CD8-positive, alpha-beta memory T cell (primary cell): ENCODE measurements at regions of chr22 and their contacts with region 1.

Region 1: DNA sequence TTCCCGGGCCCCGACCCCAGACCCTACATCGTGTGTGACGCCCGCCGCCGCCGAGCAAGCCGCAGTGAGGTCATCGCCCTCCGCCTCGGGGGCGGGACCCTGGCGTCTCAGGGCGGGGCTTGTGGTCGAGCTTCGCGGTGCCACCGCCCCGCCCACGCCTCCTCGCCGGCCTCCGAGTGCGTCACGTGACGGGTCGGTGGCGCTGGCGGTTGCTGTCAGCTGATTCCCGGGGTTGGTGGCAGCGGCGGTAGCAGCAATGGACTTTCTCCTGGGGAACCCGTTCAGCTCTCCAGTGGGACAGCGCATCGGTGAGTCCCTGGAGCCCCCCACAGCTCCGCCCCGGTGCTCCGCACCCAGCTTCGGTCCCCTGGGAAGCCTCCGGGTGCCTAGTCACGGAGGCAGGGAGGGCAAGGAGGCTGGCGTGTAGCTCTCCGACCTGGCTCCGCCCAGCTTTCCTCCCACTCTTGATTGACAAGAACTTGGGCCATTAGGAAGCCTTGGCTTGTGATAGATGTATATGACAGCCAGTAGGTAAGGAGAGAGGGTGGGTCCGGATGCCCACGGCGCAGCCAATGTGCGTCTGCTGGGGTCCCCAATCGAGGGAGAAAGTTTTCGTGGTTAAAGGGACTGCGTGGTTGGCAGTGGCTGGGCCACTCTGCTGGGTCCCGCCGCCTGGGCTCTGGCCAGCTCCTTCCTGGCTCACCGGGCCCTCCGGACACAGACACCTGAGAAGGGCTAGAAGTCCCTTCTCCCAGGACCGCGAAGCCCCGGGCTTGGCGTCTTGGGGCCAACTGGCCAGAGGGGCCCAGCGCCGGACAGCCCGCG is at the start of gene TOM1:
- DNase-seq: peak; percentile 94 to 99 (median 98)
- H3K4me3 ChIP-seq: peak within 1 kb of the TSS; percentile 98
- H3K4me3 Mint-ChIP-seq: peak within 1 kb of the TSS; percentile 93 to 98 (median 95)
- H3K27ac ChIP-seq: peak within 1 kb of the TSS; percentile 99
- H3K27ac Mint-ChIP-seq: peak within 1 kb of the TSS; percentile 95 to 99 (median 99)
- H3K4me1 ChIP-seq: peaks cover 21% of the 10 kb centered on the region
- H3K4me1 Mint-ChIP-seq: peaks cover 28 to 49% (median 33%) of the 10 kb centered on the region in 3 donors
- H3K27me3 ChIP-seq: no peaks in the 10 kb centered on the region
- H3K27me3 Mint-ChIP-seq: peaks cover 0 to 1% of the 10 kb centered on the region in 2 donors
- total RNA-seq, gene TOM1: 15.1 to 17.0 TPM

Region 2: DNA sequence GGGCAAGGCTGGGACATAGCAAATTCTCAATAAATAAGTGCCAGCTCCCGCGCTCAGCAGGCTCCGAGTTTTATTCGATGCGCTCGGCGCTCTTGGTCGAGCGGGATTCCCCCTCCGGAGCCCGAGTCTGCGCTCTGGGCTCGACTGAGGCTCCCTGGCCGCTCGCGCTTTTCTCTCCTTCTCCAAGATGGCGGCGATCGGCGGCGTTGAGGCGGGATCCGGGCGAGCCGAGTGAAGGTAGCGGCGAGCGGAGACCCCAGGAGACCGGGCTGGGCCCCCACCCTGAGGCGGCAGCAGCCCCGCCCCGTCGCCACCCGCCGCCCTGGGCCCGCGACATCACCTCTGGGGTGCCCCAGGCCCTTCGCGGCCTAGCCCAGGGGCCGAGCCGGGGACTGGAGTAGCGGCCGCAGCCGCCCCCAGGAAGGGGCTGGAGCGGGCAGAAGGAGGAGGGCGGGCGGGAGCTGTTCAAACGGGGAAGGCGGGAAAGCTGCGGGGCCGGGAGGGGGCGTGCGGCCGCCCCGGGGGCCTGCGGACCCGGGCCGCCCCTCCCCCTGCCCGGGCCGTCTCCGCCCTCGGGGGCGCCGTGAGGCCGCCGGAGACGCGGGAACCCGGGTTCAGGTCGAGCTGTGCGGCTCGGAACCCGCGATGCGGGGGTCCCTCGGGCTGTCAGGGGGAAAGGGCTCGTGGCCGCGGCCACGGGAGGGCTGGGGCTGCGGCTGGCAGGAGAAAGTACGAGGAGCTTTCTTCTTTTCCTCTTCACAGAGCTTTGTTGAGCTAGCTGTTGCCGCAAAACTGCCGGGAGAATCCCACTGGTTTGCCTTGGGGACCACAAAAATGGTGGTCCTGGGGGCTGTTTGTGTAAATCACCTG is 42.3 kb before region 1 on chr22 and contains the start of gene HMGXB4:
- CTCF ChIA-PET with region 1: interaction called, 8 read pairs
- POLR2A ChIA-PET with region 1: interaction called, 22 read pairs
- DNase-seq: peak; percentile 79 to 92 (median 86)
- H3K4me3 ChIP-seq: peak within 1 kb of the TSS; percentile 52
- H3K4me3 Mint-ChIP-seq: peak within 1 kb of the TSS; percentile 91 to 98 (median 94)
- H3K27ac ChIP-seq: peak within 1 kb of the TSS; percentile 75
- H3K27ac Mint-ChIP-seq: peak within 1 kb of the TSS; percentile 95 to 98 (median 96)
- H3K4me1 ChIP-seq: peaks cover 16% of the 10 kb centered on the region
- H3K4me1 Mint-ChIP-seq: peaks cover 25 to 36% (median 32%) of the 10 kb centered on the region in 3 donors
- H3K27me3 ChIP-seq: no peaks in the 10 kb centered on the region
- H3K27me3 Mint-ChIP-seq: peaks cover 0 to 2% of the 10 kb centered on the region in 2 donors
- total RNA-seq, gene HMGXB4: 35.4 to 35.9 TPM

Region 3: GRCh38 chr22:35498026-35498800 is 198.3 kb after region 1 on chr22:
- CTCF ChIA-PET with region 1: no interaction called
- POLR2A ChIA-PET with region 1: no interaction called
- DNase-seq: no peak
- H3K4me3 ChIP-seq: no peak overlapping the region
- H3K4me3 Mint-ChIP-seq: no peak overlapping the region
- H3K27ac ChIP-seq: no peak overlapping the region
- H3K27ac Mint-ChIP-seq: peak overlapping the region in 1 of 8 donors; percentile 75
- H3K4me1 ChIP-seq: no peaks in the 10 kb centered on the region
- H3K4me1 Mint-ChIP-seq: no peaks in the 10 kb centered on the region
- H3K27me3 ChIP-seq: no peaks in the 10 kb centered on the region
- H3K27me3 Mint-ChIP-seq: peaks cover 14 to 61% of the 10 kb centered on the region in 2 donors